Ascending aorta (tissue), 2 donors: ENCODE measurements at regions of chr6 and their contacts with region 1.

Region 1: DNA sequence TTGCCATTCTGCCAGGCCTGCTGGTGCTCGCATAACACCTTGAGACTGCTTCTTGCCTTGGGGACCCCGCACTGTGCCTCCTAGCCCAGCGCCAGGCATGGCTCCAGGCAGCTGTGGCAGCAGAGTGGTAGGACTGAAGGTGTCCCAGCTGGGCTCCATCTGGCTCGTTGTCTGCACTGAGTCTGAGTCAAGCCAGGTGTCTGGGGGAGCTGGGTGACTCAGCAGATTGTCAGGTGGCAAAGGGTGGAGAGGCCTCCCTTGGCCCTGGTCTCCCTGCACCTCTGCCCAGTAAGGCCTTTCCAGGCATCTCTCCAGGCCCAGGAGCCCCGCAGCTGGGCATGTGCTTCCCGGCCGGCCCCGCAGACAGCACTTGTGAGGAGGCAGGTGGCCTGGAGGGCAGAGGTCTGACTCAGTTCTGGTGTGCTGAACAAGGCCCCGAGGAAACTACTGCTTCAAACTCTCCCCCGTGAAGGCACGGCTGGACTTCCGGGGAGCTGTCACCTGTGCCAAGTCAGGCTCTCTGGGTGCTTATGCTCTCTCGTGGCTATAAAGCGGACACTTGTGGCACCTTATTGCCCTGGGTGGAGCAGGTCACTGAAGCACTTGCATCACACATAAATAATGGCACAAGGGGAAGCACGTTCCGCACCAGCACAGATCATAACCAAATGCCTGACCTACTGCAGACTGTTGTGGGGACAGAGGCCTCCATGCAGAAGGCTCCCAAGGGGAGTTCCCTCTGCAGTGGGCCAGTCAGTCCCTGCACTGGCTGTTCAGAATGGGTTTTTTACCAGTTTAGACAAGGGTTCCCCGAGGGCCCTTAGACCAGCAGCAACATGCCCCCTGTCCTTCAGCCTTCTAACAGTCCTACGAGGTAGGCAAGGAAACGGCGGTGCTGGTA is 27.5 kb downstream of the FOXC1 start:
- DNase-seq: no peak
- H3K4me3 ChIP-seq: no peak overlapping the region
- H3K27ac ChIP-seq: peak overlapping the region; percentile 40 to 51
- H3K4me1 ChIP-seq: peaks cover 3 to 25% of the 10 kb centered on the region in 2 donors
- H3K27me3 ChIP-seq: no peaks in the 10 kb centered on the region
- CTCF ChIP-seq: no peak

Region 2: GRCh38 chr6:1255636-1256365 is 381.4 kb before region 1 on chr6:
- intact Hi-C with region 1: no loop called
- DNase-seq: no peak
- H3K4me3 ChIP-seq: no peak overlapping the region
- H3K27ac ChIP-seq: no peak overlapping the region
- H3K4me1 ChIP-seq: no peaks in the 10 kb centered on the region
- H3K27me3 ChIP-seq: no peaks in the 10 kb centered on the region
- CTCF ChIP-seq: no peak

Region 3: GRCh38 chr6:1596088-1596852 is 41.0 kb before region 1 on chr6:
- intact Hi-C with region 1: no loop called
- DNase-seq: no peak
- H3K4me3 ChIP-seq: peak overlapping the region; percentile 27 to 60
- H3K27ac ChIP-seq: no peak overlapping the region
- H3K4me1 ChIP-seq: no peaks in the 10 kb centered on the region
- H3K27me3 ChIP-seq: no peaks in the 10 kb centered on the region
- CTCF ChIP-seq: peak; percentile 92 to 98 (median 97)

Region 4: GRCh38 chr6:1679031-1679686 is 41.9 kb after region 1 on chr6:
- intact Hi-C with region 1: loop called (anchors 2 kb)
- DNase-seq: no peak
- H3K4me3 ChIP-seq: no peak overlapping the region
- H3K27ac ChIP-seq: peak overlapping the region in 1 of 2 donors; percentile 49
- H3K4me1 ChIP-seq: peaks cover 3 to 20% of the 10 kb centered on the region in 2 donors
- H3K27me3 ChIP-seq: no peaks in the 10 kb centered on the region
- CTCF ChIP-seq: no peak